CD8-positive, alpha-beta T cell (primary cell): ENCODE measurements at regions of chr14 and their contacts with region 1.

Region 1: DNA sequence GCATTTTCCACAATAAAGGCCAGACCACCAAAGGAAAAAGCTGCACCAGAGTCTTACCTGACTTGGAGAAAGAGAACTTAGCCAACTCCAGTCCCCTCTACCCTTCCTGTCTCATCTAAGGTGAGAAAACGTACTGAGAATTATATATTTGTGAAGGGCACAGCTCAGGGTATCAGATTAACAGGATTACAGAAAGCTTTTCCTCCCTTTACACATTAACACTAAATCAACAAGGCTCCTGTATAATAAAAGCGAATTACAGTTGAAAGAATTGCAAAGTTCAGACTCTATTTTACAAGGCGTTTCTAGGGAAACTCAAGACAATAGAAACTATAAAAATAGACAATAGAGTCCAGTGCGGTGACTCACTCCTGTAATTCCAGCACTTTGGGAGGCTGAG is 82.7 kb upstream of the RPL10L start:
- DNase-seq: no peak
- ATAC-seq: no peak
- H3K4me3 ChIP-seq: no peak overlapping the region
- H3K4me3 Mint-ChIP-seq: no peak overlapping the region
- H3K27ac ChIP-seq: no peak overlapping the region
- H3K27ac Mint-ChIP-seq: no peak overlapping the region
- H3K4me1 ChIP-seq: no peaks in the 10 kb centered on the region
- H3K4me1 Mint-ChIP-seq: no peaks in the 10 kb centered on the region
- H3K27me3 ChIP-seq: no peaks in the 10 kb centered on the region
- H3K27me3 Mint-ChIP-seq: no peaks in the 10 kb centered on the region
- CTCF ChIP-seq: no peak

Region 2: GRCh38 chr14:46820291-46820690 is 86.0 kb after region 1 on chr14:
- CTCF ChIA-PET with region 1: no interaction called
- POLR2A ChIA-PET with region 1: no interaction called
- intact Hi-C with region 1: no loop called
- DNase-seq: peak in 1 of 9 experiments; percentile 0
- ATAC-seq: no peak
- H3K4me3 ChIP-seq: no peak overlapping the region
- H3K4me3 Mint-ChIP-seq: no peak overlapping the region
- H3K27ac ChIP-seq: no peak overlapping the region
- H3K27ac Mint-ChIP-seq: no peak overlapping the region
- H3K4me1 ChIP-seq: no peaks in the 10 kb centered on the region
- H3K4me1 Mint-ChIP-seq: no peaks in the 10 kb centered on the region
- H3K27me3 ChIP-seq: no peaks in the 10 kb centered on the region
- H3K27me3 Mint-ChIP-seq: no peaks in the 10 kb centered on the region
- CTCF ChIP-seq: no peak

Region 3: GRCh38 chr14:47651337-47651736 is 917.1 kb after region 1 on chr14:
- CTCF ChIA-PET with region 1: no interaction called
- POLR2A ChIA-PET with region 1: no interaction called
- intact Hi-C with region 1: loop called in 1 of 2 experiments (anchors 5 kb)
- DNase-seq: no peak
- ATAC-seq: no peak
- H3K4me3 ChIP-seq: no peak overlapping the region
- H3K4me3 Mint-ChIP-seq: no peak overlapping the region
- H3K27ac ChIP-seq: no peak overlapping the region
- H3K27ac Mint-ChIP-seq: no peak overlapping the region
- H3K4me1 ChIP-seq: no peaks in the 10 kb centered on the region
- H3K4me1 Mint-ChIP-seq: no peaks in the 10 kb centered on the region
- H3K27me3 ChIP-seq: no peaks in the 10 kb centered on the region
- H3K27me3 Mint-ChIP-seq: no peaks in the 10 kb centered on the region
- CTCF ChIP-seq: no peak